Lower leg skin (tissue), 4 donors: ENCODE measurements at regions of chr1 and their contacts with region 1.

Region 1: GRCh38 chr1:171636141-171636540 is 14.1 kb downstream of the MYOCOS start:
- DNase-seq: no peak
- H3K4me3 ChIP-seq: no peak overlapping the region
- CTCF ChIP-seq: no peak
- POLR2A ChIP-seq: no peak

Region 2: DNA sequence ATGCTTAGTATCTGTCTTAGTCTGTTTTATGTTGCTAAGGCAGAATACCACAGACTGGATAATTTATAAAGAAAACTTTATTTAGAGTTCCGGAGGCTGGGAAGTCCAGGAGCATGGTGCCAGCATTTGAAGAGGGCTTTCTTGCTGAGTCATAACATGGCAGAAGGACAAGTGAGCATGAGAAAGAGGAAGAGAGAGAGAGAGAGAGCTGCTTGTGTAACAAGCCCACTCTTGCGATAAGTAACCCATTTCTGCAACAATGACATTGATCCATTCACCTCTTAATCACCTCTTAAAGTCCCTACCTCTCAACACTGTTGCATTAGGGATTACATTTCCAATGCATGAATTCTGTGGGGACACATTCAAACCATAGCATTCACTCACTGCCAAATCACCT is 25.8 kb before region 1 on chr1:
- intact Hi-C with region 1: no loop called
- DNase-seq: no peak
- H3K4me3 ChIP-seq: no peak overlapping the region
- CTCF ChIP-seq: no peak
- POLR2A ChIP-seq: no peak

Region 3: DNA sequence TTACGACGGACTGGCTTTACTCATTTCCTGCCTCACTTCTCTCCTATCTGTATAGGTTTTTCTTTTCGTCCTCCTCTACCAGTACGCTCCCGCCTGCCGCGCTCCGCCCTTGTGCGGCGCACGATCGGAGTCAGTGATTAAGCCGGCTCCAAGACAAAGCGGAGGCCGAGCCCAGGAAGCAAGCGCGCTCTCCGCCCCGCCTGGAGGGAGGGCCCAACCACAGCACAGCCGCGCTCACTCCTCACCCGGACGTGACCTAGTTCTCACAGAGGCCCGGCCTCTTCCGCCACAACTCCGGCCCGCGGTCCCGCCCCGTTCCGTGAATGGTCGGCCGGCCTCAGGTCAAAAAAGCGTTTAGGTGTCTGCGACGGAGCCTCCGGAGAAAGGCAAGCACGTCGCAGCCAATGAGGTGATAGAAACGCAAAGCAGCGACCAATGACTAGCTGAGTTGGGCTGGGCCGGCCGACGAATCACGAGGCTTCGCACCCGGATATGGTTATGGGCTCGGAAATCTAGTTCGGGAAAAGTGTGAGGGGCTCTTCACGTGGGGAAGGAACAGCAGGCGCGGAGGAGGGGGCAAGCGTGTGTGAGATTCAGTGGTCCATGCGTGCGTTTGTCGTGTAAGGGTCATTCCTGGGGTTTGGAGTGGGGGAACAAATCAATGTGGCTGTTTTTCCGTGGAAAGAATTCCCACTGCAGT is 145.2 kb after region 1 on chr1 and contains the start of gene METTL13:
- intact Hi-C with region 1: no loop called
- DNase-seq: peak; percentile 98 to 100
- H3K4me3 ChIP-seq: peak within 1 kb of the TSS; percentile 71
- CTCF ChIP-seq: no peak
- POLR2A ChIP-seq: no peak
- total RNA-seq, gene METTL13: 10.2 to 25.4 (median 17.7) TPM

Region 4: GRCh38 chr1:171858696-171859095 is 222.6 kb after region 1 on chr1:
- intact Hi-C with region 1: no loop called
- DNase-seq: no peak
- H3K4me3 ChIP-seq: no peak overlapping the region
- CTCF ChIP-seq: no peak
- POLR2A ChIP-seq: no peak

Region 5: GRCh38 chr1:171969813-171970212 is 333.7 kb after region 1 on chr1:
- intact Hi-C with region 1: loop called (anchors 10 kb)
- DNase-seq: no peak
- H3K4me3 ChIP-seq: no peak overlapping the region
- CTCF ChIP-seq: no peak
- POLR2A ChIP-seq: no peak